Activated CD8-positive, alpha-beta T cell treated with anti-CD3 and anti-CD28 coated beads for 36 hours (primary cell): ENCODE measurements at regions of chr11 and their contacts with region 1.

Region 1: DNA sequence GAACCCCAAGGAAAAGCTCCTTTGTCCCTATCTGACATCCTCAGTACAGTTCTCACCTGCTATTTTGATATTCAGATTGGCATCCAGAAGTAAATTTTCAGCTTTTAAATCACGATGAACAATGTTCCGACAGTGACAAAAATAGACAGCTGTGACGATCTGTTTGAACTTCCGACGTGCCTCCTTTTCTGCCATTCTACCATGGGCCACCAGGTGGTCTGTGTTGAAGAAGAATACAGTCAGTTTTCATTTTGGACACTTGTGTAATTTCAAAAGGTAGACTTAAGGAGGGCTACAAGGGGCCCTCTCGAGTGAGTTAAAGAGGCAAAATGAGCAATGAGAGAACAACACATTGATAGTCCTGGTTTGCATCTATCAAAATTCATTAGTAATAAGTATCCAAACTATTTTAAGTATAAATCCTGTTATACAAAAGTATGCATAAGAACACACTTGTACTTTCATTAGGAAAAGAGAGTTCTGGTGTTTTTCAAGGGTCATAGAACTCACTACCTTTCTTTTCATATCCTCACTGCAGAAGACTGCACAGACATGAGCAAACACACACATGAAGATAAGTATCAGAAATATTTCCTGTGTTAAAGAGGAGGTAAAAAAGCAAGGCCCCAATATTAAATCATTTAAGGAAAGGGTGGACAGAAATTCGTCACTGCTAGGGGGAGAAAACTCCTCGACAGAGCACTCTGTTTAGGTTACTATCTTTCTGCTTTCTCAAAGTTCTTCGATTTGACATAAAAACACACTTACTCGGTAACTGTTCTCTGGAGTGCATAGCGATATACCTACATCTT is 89.9 kb upstream of the APOA1 start:
- DNase-seq: peak; percentile 79
- ATAC-seq: peak; percentile 53
- H3K4me3 Mint-ChIP-seq: peak overlapping the region; percentile 12
- H3K27ac Mint-ChIP-seq: peak overlapping the region; percentile 70
- H3K4me1 Mint-ChIP-seq: peaks cover 76% of the 10 kb centered on the region
- H3K27me3 Mint-ChIP-seq: no peaks in the 10 kb centered on the region
- CTCF ChIP-seq: peak; percentile 79

Region 2: GRCh38 chr11:116879800-116880625 is 47.4 kb before region 1 on chr11:
- CTCF ChIA-PET with region 1: interaction called, 16 read pairs
- POLR2A ChIA-PET with region 1: no interaction called
- intact Hi-C with region 1: no loop called
- DNase-seq: peak; percentile 34
- ATAC-seq: peak; percentile 77
- H3K4me3 Mint-ChIP-seq: no peak overlapping the region
- H3K27ac Mint-ChIP-seq: no peak overlapping the region
- H3K4me1 Mint-ChIP-seq: peaks cover 19% of the 10 kb centered on the region
- H3K27me3 Mint-ChIP-seq: no peaks in the 10 kb centered on the region
- CTCF ChIP-seq: peak; percentile 71

Region 3: GRCh38 chr11:116916052-116916451 is 11.3 kb before region 1 on chr11:
- CTCF ChIA-PET with region 1: interaction called, 14 read pairs
- POLR2A ChIA-PET with region 1: interaction called, 3 read pairs
- intact Hi-C with region 1: no loop called
- DNase-seq: no peak
- ATAC-seq: no peak
- H3K4me3 Mint-ChIP-seq: no peak overlapping the region
- H3K27ac Mint-ChIP-seq: no peak overlapping the region
- H3K4me1 Mint-ChIP-seq: peaks cover 11% of the 10 kb centered on the region
- H3K27me3 Mint-ChIP-seq: no peaks in the 10 kb centered on the region
- CTCF ChIP-seq: no peak

Region 4: GRCh38 chr11:116980136-116980793 is 52.9 kb after region 1 on chr11:
- CTCF ChIA-PET with region 1: no interaction called
- POLR2A ChIA-PET with region 1: no interaction called
- intact Hi-C with region 1: loop called (anchors 5 kb)
- DNase-seq: no peak
- ATAC-seq: peak; percentile 84
- H3K4me3 Mint-ChIP-seq: peak overlapping the region; percentile 63
- H3K27ac Mint-ChIP-seq: peak overlapping the region; percentile 86
- H3K4me1 Mint-ChIP-seq: peaks cover 48% of the 10 kb centered on the region
- H3K27me3 Mint-ChIP-seq: no peaks in the 10 kb centered on the region
- CTCF ChIP-seq: no peak